H1 (cell line): ENCODE measurements at regions of chr11 and their contacts with region 1.

Region 1: GRCh38 chr11:115885535-115886421 is 381.6 kb upstream of the CADM1 start:
- DNase-seq: no peak
- H3K4me3 ChIP-seq: no peak overlapping the region
- H3K27ac ChIP-seq: no peak overlapping the region
- H3K4me1 ChIP-seq: peaks cover 0 to 3% (median 0%) of the 10 kb centered on the region in 4 experiments; a peak in 1 of 7 replicates
- H3K27me3 ChIP-seq: no peaks in the 10 kb centered on the region
- CTCF ChIP-seq: no peak
- EP300 ChIP-seq: no peak
- POLR2A ChIP-seq: no peak
- RAD21 ChIP-seq: no peak

Region 2: GRCh38 chr11:115896084-115896483 is 10.3 kb after region 1 on chr11:
- CTCF ChIA-PET with region 1: interaction called, 22 read pairs
- POLR2A ChIA-PET with region 1: no interaction called
- DNase-seq: no peak
- H3K4me3 ChIP-seq: no peak overlapping the region
- H3K27ac ChIP-seq: no peak overlapping the region
- H3K4me1 ChIP-seq: no peaks in the 10 kb centered on the region
- H3K27me3 ChIP-seq: no peaks in the 10 kb centered on the region; a peak in 1 of 7 replicates
- CTCF ChIP-seq: no peak
- EP300 ChIP-seq: no peak
- POLR2A ChIP-seq: no peak
- RAD21 ChIP-seq: no peak